Activated T-helper 1 cell treated with anti-CD3 and anti-CD28 coated beads, Interleukin-12 subunit alpha, Interleukin-12 subunit beta, Interleukin-2, Interleukin-4 antibody, amounts not matched to agents 30 ng/mL and 10 ng/mL and 1 ng/mL, durations not matched to agents 14 hours and 24 hours and 36 hours (primary cell): ENCODE measurements at regions of chr11 and their contacts with region 1.

Region 1: GRCh38 chr11:73876424-73877300 is at the starts of genes COA4 and PAAF1:
- DNase-seq: peak; percentile 92
- H3K4me3 Mint-ChIP-seq: peak within 1 kb of the TSS; percentile 93
- H3K27ac Mint-ChIP-seq: peak within 1 kb of the TSS; percentile 100
- H3K4me1 Mint-ChIP-seq: peaks cover 30% of the 10 kb centered on the region
- H3K27me3 Mint-ChIP-seq: no peaks in the 10 kb centered on the region
- total RNA-seq, gene COA4: 99.1 and 102 TPM in 2 replicates
- total RNA-seq, gene PAAF1: 22.4 and 25.0 TPM in 2 replicates

Region 2: DNA sequence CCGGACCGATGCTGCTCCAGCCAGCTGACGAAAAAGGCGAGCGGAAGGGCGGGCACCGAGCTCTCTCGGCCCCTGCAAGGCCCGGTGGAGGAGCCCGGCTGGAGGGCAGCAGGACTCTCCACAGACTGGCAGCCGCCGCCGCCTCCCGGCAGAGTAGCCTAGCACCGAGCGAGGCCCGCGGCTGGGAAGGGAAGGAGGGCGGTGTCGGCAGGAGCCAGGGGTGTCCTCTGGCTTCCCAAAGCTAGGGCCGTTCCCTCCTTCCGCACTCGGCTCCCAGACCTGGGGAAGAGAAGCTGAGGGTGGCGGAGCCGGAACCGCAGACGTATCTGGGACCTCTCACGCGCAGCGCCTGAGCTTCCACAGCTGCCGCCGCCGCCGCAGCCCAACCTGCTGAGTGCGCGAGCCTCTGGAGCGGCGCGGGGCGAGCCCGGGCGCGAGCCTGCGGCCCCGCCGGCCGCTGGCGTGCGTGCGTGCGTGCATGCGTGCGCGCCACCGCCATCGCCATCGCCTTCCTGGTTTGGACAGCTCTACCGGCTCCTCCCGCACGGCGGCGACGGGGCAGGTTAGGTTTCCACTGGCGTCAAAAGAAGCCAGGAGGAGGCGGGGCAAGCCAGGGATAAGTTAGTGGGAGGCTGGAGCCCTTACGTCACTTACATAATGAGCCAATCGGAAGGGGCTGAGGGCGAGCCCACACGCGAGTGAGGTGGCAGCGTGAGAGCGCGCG is 115.8 kb before region 1 on chr11 and contains the start of gene RAB6A:
- intact Hi-C with region 1: loop called (anchors 1 kb)
- DNase-seq: peak; percentile 100
- H3K4me3 Mint-ChIP-seq: peak within 1 kb of the TSS; percentile 98
- H3K27ac Mint-ChIP-seq: peak within 1 kb of the TSS; percentile 97
- H3K4me1 Mint-ChIP-seq: peaks cover 41% of the 10 kb centered on the region
- H3K27me3 Mint-ChIP-seq: peaks cover 3% of the 10 kb centered on the region
- total RNA-seq, gene RAB6A: 81.9 and 88.0 TPM in 2 replicates

Region 3: GRCh38 chr11:73779084-73779902 is 97.4 kb before region 1 on chr11:
- intact Hi-C with region 1: loop called (anchors 1 kb)
- DNase-seq: peak; percentile 97
- H3K4me3 Mint-ChIP-seq: peak overlapping the region; percentile 90
- H3K27ac Mint-ChIP-seq: peak overlapping the region; percentile 99
- H3K4me1 Mint-ChIP-seq: peaks cover 10% of the 10 kb centered on the region
- H3K27me3 Mint-ChIP-seq: no peaks in the 10 kb centered on the region

Region 4: DNA sequence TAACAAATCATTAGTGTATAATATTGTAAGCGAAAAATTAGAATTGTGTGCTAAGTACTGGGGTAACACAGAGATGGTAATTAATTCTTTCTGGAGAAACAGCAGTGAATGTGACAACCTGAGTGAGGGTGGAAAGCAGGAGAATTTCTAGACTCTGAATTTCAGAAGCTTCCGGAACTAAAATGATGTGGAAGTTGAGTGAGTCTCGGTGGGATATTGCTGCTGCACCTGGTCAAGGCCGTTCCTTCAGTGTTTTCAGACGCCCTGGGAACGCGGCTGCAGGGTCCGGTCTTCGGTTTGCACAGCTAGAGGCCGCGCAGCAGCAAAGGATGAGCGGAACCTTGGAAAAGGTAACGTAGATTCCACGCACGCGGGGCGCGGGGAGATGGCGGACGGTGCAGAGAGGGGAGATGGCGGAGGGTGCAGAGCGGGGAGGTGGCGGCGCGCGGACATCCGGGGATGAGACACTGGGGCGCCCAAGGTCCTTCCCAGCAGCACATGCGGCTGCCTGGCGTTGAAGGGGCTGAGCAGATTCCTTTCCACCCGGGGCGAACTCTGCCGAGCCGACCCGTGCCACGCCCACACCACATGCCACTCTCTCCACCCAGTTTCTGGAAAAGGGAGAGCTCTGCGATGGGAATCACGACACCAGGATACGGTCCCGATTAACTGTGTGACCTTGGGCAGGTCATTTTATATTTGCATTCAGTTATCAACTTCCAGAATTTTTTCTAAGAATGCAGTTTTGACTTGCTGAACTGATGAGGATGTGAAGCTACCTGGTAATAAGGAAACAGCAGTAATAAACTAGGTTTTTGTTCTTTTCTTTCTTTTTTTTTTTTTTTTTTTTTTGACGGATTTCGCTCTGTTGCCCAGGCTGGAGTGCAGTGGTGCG is 88.8 kb before region 1 on chr11 and contains the start of gene MRPL48:
- intact Hi-C with region 1: loop called (anchors 1 kb)
- DNase-seq: peak; percentile 84
- H3K4me3 Mint-ChIP-seq: peak within 1 kb of the TSS; percentile 98
- H3K27ac Mint-ChIP-seq: peak within 1 kb of the TSS; percentile 94
- H3K4me1 Mint-ChIP-seq: peaks cover 25% of the 10 kb centered on the region
- H3K27me3 Mint-ChIP-seq: no peaks in the 10 kb centered on the region
- total RNA-seq, gene MRPL48: 55.0 and 56.3 TPM in 2 replicates